ENCODE measurements at regions of chr21 and their contacts with region 1.

Region 1: GRCh38 chr21:36927719-36928117 is 38.8 kb downstream of the HLCS start:
- DNase-seq: peak; percentile 91
- H3K4me3 ChIP-seq: no peak overlapping the region
- H3K27ac ChIP-seq: no peak overlapping the region
- H3K4me1 ChIP-seq: peaks cover 29% of the 10 kb centered on the region
- H3K27me3 ChIP-seq: no peaks in the 10 kb centered on the region
- CTCF ChIP-seq: peak; percentile 97

Region 2: DNA sequence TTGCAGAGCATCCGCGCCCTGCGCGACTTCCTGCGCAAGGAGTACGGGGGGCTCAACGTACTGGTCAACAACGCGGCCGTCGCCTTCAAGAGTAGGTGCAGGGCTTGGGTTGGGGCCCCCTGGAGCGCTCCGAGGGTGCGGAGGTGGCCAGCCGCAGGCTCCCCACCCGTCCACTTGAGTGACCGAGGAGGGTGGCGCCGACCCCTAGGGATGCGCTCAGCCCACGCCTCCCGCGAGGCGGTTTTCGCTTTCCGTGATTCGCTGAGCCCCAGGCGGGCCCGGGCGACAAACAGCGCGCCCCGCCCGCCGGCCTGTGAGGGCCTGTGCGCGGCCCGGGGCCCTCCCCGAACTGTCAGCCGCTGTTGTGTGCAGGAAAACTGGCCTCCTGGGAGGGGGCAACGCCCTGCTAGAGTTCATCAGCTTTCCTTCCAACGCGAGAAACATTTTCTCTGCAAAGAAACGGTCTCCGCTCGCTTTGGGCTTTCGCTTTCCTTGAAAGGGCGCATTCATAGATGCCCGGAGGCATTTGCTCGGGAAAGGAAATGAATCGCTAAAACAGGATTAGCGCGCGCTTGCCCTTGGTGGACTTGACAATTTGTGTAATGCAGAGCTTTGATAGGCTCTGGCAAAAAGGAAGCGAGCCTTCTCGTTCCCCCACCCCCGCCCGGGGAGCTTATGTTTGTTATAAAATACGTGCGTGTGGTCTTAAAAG is 792.2 kb before region 1 on chr21:
- CTCF ChIA-PET with region 1: no interaction called
- POLR2A ChIA-PET with region 1: no interaction called
- intact Hi-C with region 1: loop called (anchors 5 kb)
- DNase-seq: peak; percentile 94
- H3K4me3 ChIP-seq: peak overlapping the region; percentile 60
- H3K27ac ChIP-seq: peak overlapping the region; percentile 76
- H3K4me1 ChIP-seq: peaks cover 15% of the 10 kb centered on the region
- H3K27me3 ChIP-seq: no peaks in the 10 kb centered on the region
- CTCF ChIP-seq: no peak

Region 3: DNA sequence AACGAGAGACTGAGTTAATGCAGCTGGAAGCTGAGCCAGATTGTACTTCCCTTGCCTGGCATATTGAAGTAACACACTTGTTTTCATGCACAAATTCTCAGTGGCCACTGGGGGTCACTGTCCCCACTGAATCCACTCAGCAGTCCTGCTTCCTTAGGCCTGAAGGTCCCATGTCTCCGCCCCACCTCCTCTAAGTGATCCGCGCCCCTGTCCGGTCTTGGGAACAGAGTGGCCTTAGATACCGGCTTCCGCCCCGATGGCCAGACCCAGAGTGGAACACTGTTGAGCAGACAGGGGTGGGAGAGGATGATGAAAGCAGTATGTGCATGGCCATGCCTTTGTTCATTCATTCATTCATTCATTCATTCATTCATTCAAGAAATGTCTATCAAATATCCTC is 507.7 kb before region 1 on chr21:
- CTCF ChIA-PET with region 1: no interaction called
- POLR2A ChIA-PET with region 1: no interaction called
- intact Hi-C with region 1: loop called (anchors 2 kb)
- DNase-seq: peak; percentile 90
- H3K4me3 ChIP-seq: no peak overlapping the region
- H3K27ac ChIP-seq: peak overlapping the region; percentile 52
- H3K4me1 ChIP-seq: peaks cover 27% of the 10 kb centered on the region
- H3K27me3 ChIP-seq: no peaks in the 10 kb centered on the region
- CTCF ChIP-seq: peak; percentile 86

Region 4: GRCh38 chr21:36589355-36589971 is 338.3 kb before region 1 on chr21:
- CTCF ChIA-PET with region 1: no interaction called
- POLR2A ChIA-PET with region 1: no interaction called
- intact Hi-C with region 1: loop called (anchors 5 kb)
- DNase-seq: peak; percentile 81
- H3K4me3 ChIP-seq: no peak overlapping the region
- H3K27ac ChIP-seq: peak overlapping the region; percentile 4
- H3K4me1 ChIP-seq: peaks cover 8% of the 10 kb centered on the region
- H3K27me3 ChIP-seq: no peaks in the 10 kb centered on the region
- CTCF ChIP-seq: peak; percentile 83

Region 5: GRCh38 chr21:36749935-36750578 is 177.7 kb before region 1 on chr21:
- CTCF ChIA-PET with region 1: no interaction called
- POLR2A ChIA-PET with region 1: no interaction called
- intact Hi-C with region 1: loop called (anchors 5 kb)
- DNase-seq: peak; percentile 46
- H3K4me3 ChIP-seq: no peak overlapping the region
- H3K27ac ChIP-seq: peak overlapping the region; percentile 9
- H3K4me1 ChIP-seq: peaks cover 40% of the 10 kb centered on the region
- H3K27me3 ChIP-seq: no peaks in the 10 kb centered on the region
- CTCF ChIP-seq: no peak

Measured in A673 (cell line).